CD4-positive, alpha-beta T cell (primary cell): ENCODE measurements at regions of chr3 and their contacts with region 1.

Region 1: GRCh38 chr3:195442573-195443390 is at the start of gene ACAP2:
- DNase-seq: peak; percentile 95 to 100 (median 99)
- ATAC-seq: peak; percentile 91
- H3K4me3 ChIP-seq: peak within 1 kb of the TSS; percentile 89
- H3K4me3 Mint-ChIP-seq: peak within 1 kb of the TSS; percentile 98
- H3K27ac ChIP-seq: peak within 1 kb of the TSS; percentile 74 to 85
- H3K27ac Mint-ChIP-seq: peak within 1 kb of the TSS; percentile 93
- H3K4me1 ChIP-seq: peaks cover 32% of the 10 kb centered on the region
- H3K4me1 Mint-ChIP-seq: peaks cover 65% of the 10 kb centered on the region
- H3K27me3 ChIP-seq: no peaks in the 10 kb centered on the region
- H3K27me3 Mint-ChIP-seq: no peaks in the 10 kb centered on the region
- CTCF ChIP-seq: no peak
- total RNA-seq, gene ACAP2: 50.7 to 51.4 TPM

Region 2: DNA sequence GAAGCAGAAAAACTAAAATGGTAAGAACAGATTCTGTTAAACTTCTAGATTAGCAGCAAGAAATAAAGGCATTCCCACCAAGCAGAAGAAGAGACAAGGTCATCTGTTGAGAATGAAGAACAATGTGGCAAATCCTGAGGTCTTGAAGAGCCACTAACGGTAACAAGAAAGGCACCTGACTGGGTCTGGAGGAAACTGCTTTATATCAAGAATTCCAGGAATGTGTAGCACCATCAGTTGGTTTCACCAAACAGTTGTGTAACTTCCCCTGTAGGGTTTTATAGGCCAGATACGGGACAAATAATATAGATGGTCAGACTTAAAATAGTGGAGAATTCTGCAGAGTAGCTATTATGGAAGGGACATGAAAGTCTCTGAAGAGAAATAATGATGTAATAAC is 57.3 kb before region 1 on chr3:
- CTCF ChIA-PET with region 1: no interaction called
- POLR2A ChIA-PET with region 1: interaction called, 10 read pairs
- intact Hi-C with region 1: no loop called
- DNase-seq: no peak
- ATAC-seq: no peak
- H3K4me3 ChIP-seq: no peak overlapping the region
- H3K4me3 Mint-ChIP-seq: no peak overlapping the region
- H3K27ac ChIP-seq: no peak overlapping the region
- H3K27ac Mint-ChIP-seq: peak overlapping the region; percentile 13
- H3K4me1 ChIP-seq: no peaks in the 10 kb centered on the region
- H3K4me1 Mint-ChIP-seq: peaks cover 51% of the 10 kb centered on the region
- H3K27me3 ChIP-seq: no peaks in the 10 kb centered on the region
- H3K27me3 Mint-ChIP-seq: no peaks in the 10 kb centered on the region
- CTCF ChIP-seq: no peak

Region 3: GRCh38 chr3:195394700-195395099 is 48.1 kb before region 1 on chr3:
- CTCF ChIA-PET with region 1: interaction called, 3 read pairs
- POLR2A ChIA-PET with region 1: interaction called, 3 read pairs
- intact Hi-C with region 1: loop called in 1 of 2 experiments (anchors 5 kb)
- DNase-seq: no peak
- ATAC-seq: no peak
- H3K4me3 ChIP-seq: no peak overlapping the region
- H3K4me3 Mint-ChIP-seq: no peak overlapping the region
- H3K27ac ChIP-seq: no peak overlapping the region
- H3K27ac Mint-ChIP-seq: no peak overlapping the region
- H3K4me1 ChIP-seq: peaks cover 3% of the 10 kb centered on the region
- H3K4me1 Mint-ChIP-seq: peaks cover 40% of the 10 kb centered on the region
- H3K27me3 ChIP-seq: no peaks in the 10 kb centered on the region
- H3K27me3 Mint-ChIP-seq: no peaks in the 10 kb centered on the region
- CTCF ChIP-seq: no peak

Region 4: DNA sequence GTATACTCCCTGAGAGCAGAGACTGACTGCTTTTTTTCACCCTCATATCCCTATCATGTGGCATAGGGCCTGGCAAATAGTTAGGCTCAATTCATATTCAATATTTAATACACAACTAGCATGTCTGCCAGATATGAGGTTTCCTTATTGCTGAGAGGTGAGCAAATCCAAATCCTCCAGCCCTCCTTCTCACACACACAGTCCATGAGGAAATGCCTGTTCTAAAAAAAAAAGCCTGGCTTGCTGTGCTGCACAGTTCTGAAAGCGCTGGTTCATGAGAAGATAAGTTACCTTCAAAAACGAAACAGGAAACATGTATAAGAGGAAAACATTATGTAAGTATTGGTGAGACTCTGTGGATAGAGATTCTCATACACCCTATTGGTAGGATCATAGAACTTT is 15.5 kb after region 1 on chr3:
- CTCF ChIA-PET with region 1: no interaction called
- POLR2A ChIA-PET with region 1: interaction called, 11 read pairs
- intact Hi-C with region 1: loop called in 1 of 2 experiments (anchors 2 kb)
- DNase-seq: peak in 4 of 14 experiments; percentile 16 to 66 (median 63)
- ATAC-seq: peak; percentile 98
- H3K4me3 ChIP-seq: peak overlapping the region; percentile 37
- H3K4me3 Mint-ChIP-seq: peak overlapping the region; percentile 76
- H3K27ac ChIP-seq: peak overlapping the region in 1 of 2 donors; percentile 62
- H3K27ac Mint-ChIP-seq: peak overlapping the region; percentile 88
- H3K4me1 ChIP-seq: peaks cover 17% of the 10 kb centered on the region
- H3K4me1 Mint-ChIP-seq: peaks cover 31% of the 10 kb centered on the region
- H3K27me3 ChIP-seq: no peaks in the 10 kb centered on the region
- H3K27me3 Mint-ChIP-seq: no peaks in the 10 kb centered on the region
- CTCF ChIP-seq: no peak

Region 5: GRCh38 chr3:195508185-195508584 is 65.4 kb after region 1 on chr3:
- CTCF ChIA-PET with region 1: no interaction called
- POLR2A ChIA-PET with region 1: no interaction called
- intact Hi-C with region 1: loop called in 1 of 2 experiments (anchors 10 kb)
- DNase-seq: peak in 2 of 14 experiments; percentile 1 to 4
- ATAC-seq: no peak
- H3K4me3 ChIP-seq: no peak overlapping the region
- H3K4me3 Mint-ChIP-seq: no peak overlapping the region
- H3K27ac ChIP-seq: no peak overlapping the region
- H3K27ac Mint-ChIP-seq: peak overlapping the region; percentile 58
- H3K4me1 ChIP-seq: peaks cover 4% of the 10 kb centered on the region
- H3K4me1 Mint-ChIP-seq: peaks cover 19% of the 10 kb centered on the region
- H3K27me3 ChIP-seq: no peaks in the 10 kb centered on the region
- H3K27me3 Mint-ChIP-seq: no peaks in the 10 kb centered on the region
- CTCF ChIP-seq: no peak

Region 6: GRCh38 chr3:196537319-196537984 is 1094.7 kb after region 1 on chr3:
- CTCF ChIA-PET with region 1: no interaction called
- POLR2A ChIA-PET with region 1: no interaction called
- intact Hi-C with region 1: no loop called
- DNase-seq: peak; percentile 43 to 83 (median 63)
- ATAC-seq: no peak
- H3K4me3 ChIP-seq: no peak overlapping the region
- H3K4me3 Mint-ChIP-seq: no peak overlapping the region
- H3K27ac ChIP-seq: no peak overlapping the region
- H3K27ac Mint-ChIP-seq: no peak overlapping the region
- H3K4me1 ChIP-seq: peaks cover 3% of the 10 kb centered on the region
- H3K4me1 Mint-ChIP-seq: no peaks in the 10 kb centered on the region
- H3K27me3 ChIP-seq: no peaks in the 10 kb centered on the region
- H3K27me3 Mint-ChIP-seq: no peaks in the 10 kb centered on the region
- CTCF ChIP-seq: peak; percentile 91